SK-N-SH (cell line): ENCODE measurements at regions of chrX and their contacts with region 1.

Region 1: GRCh38 chrX:107776649-107777535 is 641 bp upstream of the NCBP2L start:
- DNase-seq: peak; percentile 73
- H3K4me3 ChIP-seq: peak overlapping the region; percentile 37 to 58
- H3K27ac ChIP-seq: no peak overlapping the region
- H3K4me1 ChIP-seq: peaks cover 0 to 5% of the 10 kb centered on the region in 2 experiments; a peak in 1 of 4 replicates
- H3K27me3 ChIP-seq: peaks cover 51% of the 10 kb centered on the region
- CTCF ChIP-seq: peak; percentile 80
- EP300 ChIP-seq: no peak
- RAD21 ChIP-seq: peak; percentile 82

Region 2: DNA sequence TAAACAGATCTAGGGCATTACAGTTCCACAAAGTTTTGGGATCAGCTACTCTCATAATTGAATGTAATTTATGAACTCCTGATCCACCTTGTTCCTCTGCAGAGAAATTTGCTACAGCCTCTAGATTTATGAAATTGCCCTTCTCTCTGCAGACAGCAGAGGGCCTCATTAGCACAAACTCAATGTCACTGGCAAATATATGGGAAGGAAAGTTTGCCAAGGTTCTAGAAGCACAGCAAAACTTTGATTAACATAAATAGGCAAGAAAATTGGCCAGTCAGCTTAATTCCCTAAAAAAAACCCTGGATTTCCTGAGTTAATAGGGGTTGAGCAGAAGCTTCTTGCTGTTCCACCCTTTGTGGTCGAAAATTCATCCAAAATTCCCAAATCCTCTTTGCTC is 117.1 kb before region 1 on chrX:
- CTCF ChIA-PET with region 1: interaction called, 63 read pairs
- POLR2A ChIA-PET with region 1: interaction called, 4 read pairs
- DNase-seq: peak; percentile 32
- H3K4me3 ChIP-seq: no peak overlapping the region
- H3K27ac ChIP-seq: no peak overlapping the region
- H3K4me1 ChIP-seq: no peaks in the 10 kb centered on the region; a peak in 1 of 4 replicates
- H3K27me3 ChIP-seq: no peaks in the 10 kb centered on the region; the same call in 1 of the 2 replicates
- CTCF ChIP-seq: peak; percentile 76
- EP300 ChIP-seq: no peak
- RAD21 ChIP-seq: peak; percentile 74

Region 3: DNA sequence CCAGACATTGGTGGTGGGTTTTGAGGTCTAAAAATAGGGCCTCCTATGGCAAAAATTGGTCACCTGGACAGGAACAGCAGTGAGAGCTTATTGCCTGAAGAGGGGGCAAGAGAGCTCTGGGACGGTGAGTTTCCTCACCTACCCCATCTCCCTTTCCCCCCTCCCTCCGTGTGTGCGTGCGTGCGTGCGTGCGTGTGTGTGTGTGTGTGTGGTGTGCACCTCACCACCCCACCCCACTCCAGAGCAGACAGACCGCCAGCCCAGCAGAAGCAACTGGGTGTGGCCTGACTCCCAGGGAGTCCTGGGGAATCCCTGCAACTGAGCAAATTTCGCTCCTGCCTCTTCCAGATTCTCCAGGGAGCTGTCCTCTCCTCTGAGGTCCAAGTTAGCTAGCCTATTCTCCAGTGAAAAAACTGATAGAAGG is 103.9 kb before region 1 on chrX:
- CTCF ChIA-PET with region 1: interaction called, 22 read pairs
- POLR2A ChIA-PET with region 1: no interaction called
- DNase-seq: peak; percentile 67
- H3K4me3 ChIP-seq: no peak overlapping the region
- H3K27ac ChIP-seq: no peak overlapping the region
- H3K4me1 ChIP-seq: no peaks in the 10 kb centered on the region
- H3K27me3 ChIP-seq: peaks cover 20% of the 10 kb centered on the region
- CTCF ChIP-seq: peak; percentile 63
- EP300 ChIP-seq: no peak
- RAD21 ChIP-seq: peak; percentile 64

Region 4: DNA sequence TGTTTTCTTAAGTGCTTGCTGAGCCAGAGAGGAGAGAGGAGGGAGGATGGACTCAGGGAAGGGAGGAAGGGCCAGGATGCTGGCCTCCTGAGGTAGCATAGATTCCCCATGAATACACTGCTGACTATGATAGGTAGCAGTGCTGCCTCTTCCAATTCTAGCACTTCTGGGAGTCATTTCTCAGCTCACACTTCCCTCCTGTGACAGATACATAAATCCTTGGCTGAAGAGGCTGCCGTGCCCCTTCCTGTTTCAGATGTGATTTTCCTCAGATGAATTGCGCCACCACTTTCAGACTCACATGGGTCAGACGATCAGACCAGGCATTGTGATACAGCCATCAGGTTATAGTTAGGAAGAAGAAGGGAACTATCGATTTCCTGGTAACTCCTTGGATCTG is 23.7 kb before region 1 on chrX:
- CTCF ChIA-PET with region 1: interaction called, 11 read pairs
- POLR2A ChIA-PET with region 1: no interaction called
- DNase-seq: no peak
- H3K4me3 ChIP-seq: no peak overlapping the region
- H3K27ac ChIP-seq: no peak overlapping the region
- H3K4me1 ChIP-seq: no peaks in the 10 kb centered on the region
- H3K27me3 ChIP-seq: peaks cover 38% of the 10 kb centered on the region
- CTCF ChIP-seq: no peak
- EP300 ChIP-seq: no peak
- RAD21 ChIP-seq: no peak

Region 5: GRCh38 chrX:107787827-107788226 is 10.9 kb after region 1 on chrX:
- CTCF ChIA-PET with region 1: interaction called, 19 read pairs
- POLR2A ChIA-PET with region 1: no interaction called
- DNase-seq: no peak
- H3K4me3 ChIP-seq: no peak overlapping the region
- H3K27ac ChIP-seq: no peak overlapping the region
- H3K4me1 ChIP-seq: no peaks in the 10 kb centered on the region
- H3K27me3 ChIP-seq: no peaks in the 10 kb centered on the region; the same call in 1 of the 2 replicates
- CTCF ChIP-seq: no peak
- EP300 ChIP-seq: no peak
- RAD21 ChIP-seq: no peak

Region 6: DNA sequence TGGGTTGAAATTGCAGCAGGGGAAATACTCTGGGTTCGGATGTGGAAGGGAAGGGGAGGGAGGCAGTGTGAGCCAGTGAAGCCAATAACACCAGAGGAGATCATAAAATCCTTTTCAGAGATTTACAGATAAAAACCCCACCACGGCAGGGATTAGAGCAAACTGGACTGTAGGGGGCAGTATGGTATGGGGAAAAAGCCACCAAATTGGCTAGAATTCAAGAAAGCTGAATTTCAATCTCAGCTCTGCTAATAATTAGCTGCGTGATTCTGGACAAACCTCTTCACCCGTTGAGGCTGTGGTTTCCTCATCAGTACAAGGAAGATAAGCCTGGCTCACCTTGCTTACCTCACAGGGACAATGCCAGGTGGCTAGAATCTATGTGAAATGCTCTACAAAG is 422.8 kb after region 1 on chrX:
- CTCF ChIA-PET with region 1: no interaction called
- POLR2A ChIA-PET with region 1: no interaction called
- DNase-seq: peak; percentile 23
- H3K4me3 ChIP-seq: no peak overlapping the region
- H3K27ac ChIP-seq: no peak overlapping the region
- H3K4me1 ChIP-seq: no peaks in the 10 kb centered on the region
- H3K27me3 ChIP-seq: peaks cover 26% of the 10 kb centered on the region
- CTCF ChIP-seq: peak; percentile 68
- EP300 ChIP-seq: no peak
- RAD21 ChIP-seq: peak; percentile 53